ENCODE measurements at regions of chr16 and their contacts with region 1.

Region 1: DNA sequence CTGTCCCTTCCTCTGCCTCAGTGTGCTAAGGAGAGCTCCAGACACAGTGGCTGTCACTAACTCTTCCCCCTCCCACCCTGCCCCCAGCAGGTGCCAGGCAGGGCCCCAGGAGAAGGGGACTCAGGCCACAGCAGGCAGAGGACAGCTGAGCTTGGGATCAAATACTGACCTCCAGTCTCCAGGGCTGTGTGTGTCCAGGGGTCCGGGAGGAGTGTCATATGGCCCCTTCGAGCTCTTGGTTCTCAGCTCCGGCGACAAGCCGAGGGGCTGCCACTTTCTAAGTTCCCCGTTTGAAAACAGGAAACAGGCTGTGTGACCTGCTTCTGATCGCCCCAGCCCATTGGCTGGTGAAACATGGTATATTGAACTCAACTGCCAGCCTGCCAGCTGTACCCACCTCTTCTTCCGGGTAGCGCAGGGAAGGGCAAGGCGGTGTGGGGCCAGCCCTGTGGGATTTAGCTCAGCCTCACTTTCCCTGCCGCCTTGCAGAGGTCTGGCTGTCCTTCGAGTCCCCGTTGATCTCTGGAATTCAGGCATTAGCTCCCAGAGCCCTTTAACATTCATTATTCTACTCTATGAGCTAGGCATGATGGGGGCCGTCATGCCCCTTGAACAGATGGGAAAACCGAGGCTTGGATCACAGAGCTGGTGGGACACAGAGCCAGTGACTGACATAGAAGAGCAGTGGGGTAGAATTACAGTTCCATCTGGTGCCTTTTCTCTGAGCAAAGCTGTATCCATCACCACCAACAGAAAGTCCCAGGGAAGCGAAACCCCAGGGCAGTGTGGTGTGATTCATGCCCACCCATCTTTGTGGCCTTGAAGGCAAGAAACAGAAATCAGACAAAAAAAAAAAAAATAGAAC is at the start of gene SNX20:
- DNase-seq: peak; percentile 81
- ATAC-seq: peak; percentile 76
- H3K4me3 ChIP-seq: peak within 1 kb of the TSS; percentile 76 to 96 (median 93)
- H3K4me3 Mint-ChIP-seq: peak within 1 kb of the TSS; percentile 93
- H3K27ac ChIP-seq: peak within 1 kb of the TSS; percentile 92 to 95
- H3K27ac Mint-ChIP-seq: peak within 1 kb of the TSS; percentile 98
- H3K4me1 ChIP-seq: peaks cover 74 to 76% of the 10 kb centered on the region in 2 donors
- H3K4me1 Mint-ChIP-seq: peaks cover 73% of the 10 kb centered on the region
- H3K27me3 ChIP-seq: no peaks in the 10 kb centered on the region
- H3K27me3 Mint-ChIP-seq: no peaks in the 10 kb centered on the region
- CTCF ChIP-seq: no peak
- total RNA-seq, gene SNX20: 43.0 and 47.7 TPM in 2 replicates

Region 2: GRCh38 chr16:50152807-50153452 is 528.3 kb before region 1 on chr16 and contains the start of gene TENT4B:
- CTCF ChIA-PET with region 1: no interaction called
- POLR2A ChIA-PET with region 1: no interaction called
- intact Hi-C with region 1: loop called (anchors 5 kb)
- DNase-seq: peak; percentile 96
- ATAC-seq: peak; percentile 81
- H3K4me3 ChIP-seq: peak within 1 kb of the TSS; percentile 46 to 93 (median 82)
- H3K4me3 Mint-ChIP-seq: peak within 1 kb of the TSS; percentile 90
- H3K27ac ChIP-seq: peak within 1 kb of the TSS; percentile 85 to 86
- H3K27ac Mint-ChIP-seq: peak within 1 kb of the TSS; percentile 94
- H3K4me1 ChIP-seq: peaks cover 23 to 28% of the 10 kb centered on the region in 2 donors
- H3K4me1 Mint-ChIP-seq: peaks cover 34% of the 10 kb centered on the region
- H3K27me3 ChIP-seq: no peaks in the 10 kb centered on the region
- H3K27me3 Mint-ChIP-seq: no peaks in the 10 kb centered on the region
- CTCF ChIP-seq: no peak
- total RNA-seq, gene TENT4B: 17.1 and 18.6 TPM in 2 replicates

Region 3: DNA sequence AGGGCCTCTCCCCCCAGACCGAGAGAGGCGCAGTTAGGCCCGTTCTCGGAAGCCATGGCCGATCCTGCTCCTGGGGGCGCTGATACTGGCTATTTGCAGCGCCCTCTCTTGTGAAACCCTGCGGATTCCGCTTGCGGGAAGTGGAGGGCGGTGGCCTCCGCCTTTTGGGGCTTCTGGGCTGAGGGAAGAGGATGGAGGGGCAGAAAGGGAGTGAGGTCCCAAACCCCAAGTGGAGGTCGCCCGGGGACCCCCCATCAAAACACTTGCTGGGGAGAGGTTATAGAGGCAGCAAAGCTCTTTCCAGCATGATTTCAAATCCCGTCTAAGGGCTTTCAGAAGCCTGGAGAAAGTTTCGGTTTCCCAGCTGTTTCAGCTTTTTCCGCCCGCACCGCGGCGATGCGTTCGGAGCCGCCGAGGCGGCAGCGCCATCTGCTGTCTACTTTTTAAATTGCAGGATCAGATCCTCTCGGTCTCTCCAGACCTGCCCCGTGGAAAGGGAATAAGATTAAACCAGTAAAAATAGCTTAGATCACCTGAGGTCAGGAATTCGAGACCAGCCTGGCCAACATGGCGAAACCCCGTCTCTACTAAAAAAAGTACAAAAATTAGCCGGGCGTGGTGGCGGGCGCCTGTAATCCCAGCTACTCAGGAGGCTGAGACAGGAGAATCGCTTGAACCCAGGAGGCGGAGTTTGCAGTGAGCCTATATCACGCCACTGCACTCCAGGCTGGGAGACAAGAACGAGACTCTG is 15.9 kb before region 1 on chr16:
- CTCF ChIA-PET with region 1: interaction called, 154 read pairs
- POLR2A ChIA-PET with region 1: interaction called, 6 read pairs
- intact Hi-C with region 1: loop called (anchors 2 kb)
- DNase-seq: peak; percentile 81
- ATAC-seq: peak; percentile 71
- H3K4me3 ChIP-seq: peak overlapping the region; percentile 43 to 59 (median 49)
- H3K4me3 Mint-ChIP-seq: peak overlapping the region; percentile 86
- H3K27ac ChIP-seq: peak overlapping the region in 1 of 2 donors; percentile 7
- H3K27ac Mint-ChIP-seq: peak overlapping the region; percentile 79
- H3K4me1 ChIP-seq: peaks cover 10 to 21% of the 10 kb centered on the region in 2 donors
- H3K4me1 Mint-ChIP-seq: peaks cover 25% of the 10 kb centered on the region
- H3K27me3 ChIP-seq: no peaks in the 10 kb centered on the region
- H3K27me3 Mint-ChIP-seq: no peaks in the 10 kb centered on the region
- CTCF ChIP-seq: peak; percentile 93

Region 4: GRCh38 chr16:50741808-50742575 is 60.7 kb after region 1 on chr16 and contains the start of gene CYLD:
- CTCF ChIA-PET with region 1: interaction called, 44 read pairs
- POLR2A ChIA-PET with region 1: interaction called, 10 read pairs
- intact Hi-C with region 1: loop called (anchors 1 kb)
- DNase-seq: peak; percentile 100
- ATAC-seq: peak; percentile 86
- H3K4me3 ChIP-seq: peak within 1 kb of the TSS; percentile 75 to 96 (median 85)
- H3K4me3 Mint-ChIP-seq: peak within 1 kb of the TSS; percentile 91
- H3K27ac ChIP-seq: peak within 1 kb of the TSS; percentile 100
- H3K27ac Mint-ChIP-seq: peak within 1 kb of the TSS; percentile 97
- H3K4me1 ChIP-seq: peaks cover 34% of the 10 kb centered on the region in 2 donors
- H3K4me1 Mint-ChIP-seq: peaks cover 49% of the 10 kb centered on the region
- H3K27me3 ChIP-seq: no peaks in the 10 kb centered on the region
- H3K27me3 Mint-ChIP-seq: no peaks in the 10 kb centered on the region
- CTCF ChIP-seq: no peak
- total RNA-seq, gene CYLD: 160 and 166 TPM in 2 replicates

Measured in B cell (primary cell).